ENCODE measurements at regions of chr5 and their contacts with region 1.

Region 1: DNA sequence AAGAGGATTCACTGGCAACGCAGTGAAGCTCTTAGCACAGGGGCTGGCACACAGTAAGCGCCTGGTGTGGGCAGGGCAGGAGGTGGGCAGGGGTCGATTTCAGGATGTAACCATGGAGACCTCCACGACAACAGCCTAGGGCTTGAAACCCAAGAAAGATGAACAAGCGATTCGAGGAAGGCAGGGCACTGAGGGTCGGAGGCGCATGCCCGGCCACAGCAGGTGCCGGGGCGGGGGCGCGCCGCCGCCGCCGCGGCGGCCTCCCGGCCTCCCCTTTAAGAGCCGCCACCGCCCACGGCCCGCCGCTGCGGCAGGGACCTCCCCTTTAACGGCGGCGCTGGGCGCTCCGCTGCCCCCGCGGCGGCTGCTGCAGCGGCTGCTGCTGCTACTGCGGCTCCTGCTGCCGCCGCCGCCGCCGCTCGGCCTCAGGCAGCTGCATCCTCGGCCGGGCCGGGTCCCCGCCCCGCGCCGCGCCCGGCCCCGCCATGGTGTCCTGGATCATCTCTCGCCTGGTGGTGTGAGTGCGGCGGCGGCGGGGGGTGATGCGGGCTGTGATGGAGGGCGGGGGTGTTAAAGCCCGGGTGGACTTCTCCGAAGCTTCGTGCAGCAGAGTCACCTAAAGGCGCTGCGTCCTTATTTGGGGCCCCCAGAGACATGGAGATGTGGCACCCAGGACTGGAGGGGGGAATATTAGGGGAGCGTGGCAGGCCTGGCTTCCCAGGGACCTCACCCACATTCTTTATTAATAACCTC is at the start of gene REEP2:
- DNase-seq: peak; percentile 78
- ATAC-seq: peak; percentile 86
- H3K4me3 ChIP-seq: peak within 1 kb of the TSS in 4 of 5 experiments; percentile 22 to 56 (median 47)
- H3K4me3 Mint-ChIP-seq: peak within 1 kb of the TSS; percentile 86
- H3K27ac ChIP-seq: no peak within 1 kb of the TSS
- H3K27ac Mint-ChIP-seq: peak within 1 kb of the TSS; percentile 8
- H3K4me1 ChIP-seq: peaks cover 11 to 13% of the 10 kb centered on the region in 2 donors
- H3K4me1 Mint-ChIP-seq: peaks cover 13% of the 10 kb centered on the region
- H3K27me3 ChIP-seq: peaks cover 0 to 11% (median 3%) of the 10 kb centered on the region in 4 experiments
- H3K27me3 Mint-ChIP-seq: peaks cover 4% of the 10 kb centered on the region
- CTCF ChIP-seq: no peak
- total RNA-seq, gene REEP2: 0.20 and 0.44 TPM in 2 replicates

Region 2: GRCh38 chr5:138241688-138242571 is 197.0 kb before region 1 on chr5:
- CTCF ChIA-PET with region 1: no interaction called
- POLR2A ChIA-PET with region 1: no interaction called
- intact Hi-C with region 1: no loop called
- DNase-seq: peak; percentile 53
- ATAC-seq: no peak
- H3K4me3 ChIP-seq: peak overlapping the region in 3 of 5 experiments; percentile 36 to 56 (median 49)
- H3K4me3 Mint-ChIP-seq: peak overlapping the region; percentile 83
- H3K27ac ChIP-seq: no peak overlapping the region
- H3K27ac Mint-ChIP-seq: no peak overlapping the region
- H3K4me1 ChIP-seq: peaks cover 17 to 21% of the 10 kb centered on the region in 2 donors
- H3K4me1 Mint-ChIP-seq: peaks cover 19% of the 10 kb centered on the region
- H3K27me3 ChIP-seq: peaks cover 0 to 52% (median 41%) of the 10 kb centered on the region in 4 experiments
- H3K27me3 Mint-ChIP-seq: peaks cover 47% of the 10 kb centered on the region
- CTCF ChIP-seq: no peak

Region 3: DNA sequence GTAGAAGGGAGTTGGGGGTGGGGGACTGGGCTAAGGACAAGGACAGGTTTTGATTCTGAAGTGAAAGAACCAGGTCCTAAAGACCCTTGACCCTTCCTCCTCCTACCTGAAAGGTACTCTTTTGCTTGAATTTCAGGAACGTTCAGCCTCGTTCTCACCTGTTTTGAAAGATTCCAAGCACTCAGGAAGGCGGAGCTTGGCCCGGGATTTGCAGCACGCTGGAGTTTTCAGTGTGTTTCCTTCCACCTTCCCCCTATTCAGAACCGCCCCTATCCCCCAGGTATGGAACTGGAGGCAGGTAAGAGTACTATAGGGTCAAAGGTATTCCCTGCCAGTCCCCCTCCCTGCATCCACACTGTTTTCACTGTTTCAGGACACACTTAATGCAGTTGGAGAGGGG is 33.5 kb after region 1 on chr5:
- CTCF ChIA-PET with region 1: no interaction called
- POLR2A ChIA-PET with region 1: no interaction called
- intact Hi-C with region 1: no loop called
- DNase-seq: no peak
- ATAC-seq: no peak
- H3K4me3 ChIP-seq: no peak overlapping the region
- H3K4me3 Mint-ChIP-seq: no peak overlapping the region
- H3K27ac ChIP-seq: no peak overlapping the region
- H3K27ac Mint-ChIP-seq: no peak overlapping the region
- H3K4me1 ChIP-seq: no peaks in the 10 kb centered on the region
- H3K4me1 Mint-ChIP-seq: peaks cover 12% of the 10 kb centered on the region
- H3K27me3 ChIP-seq: no peaks in the 10 kb centered on the region
- H3K27me3 Mint-ChIP-seq: peaks cover 10% of the 10 kb centered on the region
- CTCF ChIP-seq: no peak

Region 4: GRCh38 chr5:138503487-138504270 is 64.8 kb after region 1 on chr5:
- CTCF ChIA-PET with region 1: interaction called, 10 read pairs
- POLR2A ChIA-PET with region 1: no interaction called
- intact Hi-C with region 1: no loop called
- DNase-seq: peak; percentile 73
- ATAC-seq: peak; percentile 78
- H3K4me3 ChIP-seq: no peak overlapping the region
- H3K4me3 Mint-ChIP-seq: no peak overlapping the region
- H3K27ac ChIP-seq: no peak overlapping the region
- H3K27ac Mint-ChIP-seq: no peak overlapping the region
- H3K4me1 ChIP-seq: no peaks in the 10 kb centered on the region
- H3K4me1 Mint-ChIP-seq: no peaks in the 10 kb centered on the region
- H3K27me3 ChIP-seq: no peaks in the 10 kb centered on the region
- H3K27me3 Mint-ChIP-seq: no peaks in the 10 kb centered on the region
- CTCF ChIP-seq: peak; percentile 74